ENCODE measurements at regions of chr15 and their contacts with region 1.

Region 1: GRCh38 chr15:89112341-89112971 is 24.2 kb downstream of the ABHD2 start:
- DNase-seq: no peak
- H3K4me3 ChIP-seq: no peak overlapping the region
- H3K27ac ChIP-seq: peak overlapping the region; percentile 51 to 68
- H3K4me1 ChIP-seq: peaks cover 14 to 54% of the 10 kb centered on the region in 2 experiments
- H3K27me3 ChIP-seq: no peaks in the 10 kb centered on the region
- CTCF ChIP-seq: no peak
- EP300 ChIP-seq: no peak; a peak in 1 of 4 replicates
- RAD21 ChIP-seq: no peak

Region 2: GRCh38 chr15:88982304-88982945 is 130.0 kb before region 1 on chr15:
- CTCF ChIA-PET with region 1: no interaction called
- POLR2A ChIA-PET with region 1: no interaction called
- DNase-seq: peak; percentile 44
- H3K4me3 ChIP-seq: no peak overlapping the region
- H3K27ac ChIP-seq: no peak overlapping the region; a peak in 1 of 4 replicates
- H3K4me1 ChIP-seq: no peaks in the 10 kb centered on the region; a peak in 1 of 4 replicates
- H3K27me3 ChIP-seq: no peaks in the 10 kb centered on the region
- CTCF ChIP-seq: no peak
- EP300 ChIP-seq: no peak
- RAD21 ChIP-seq: no peak

Region 3: DNA sequence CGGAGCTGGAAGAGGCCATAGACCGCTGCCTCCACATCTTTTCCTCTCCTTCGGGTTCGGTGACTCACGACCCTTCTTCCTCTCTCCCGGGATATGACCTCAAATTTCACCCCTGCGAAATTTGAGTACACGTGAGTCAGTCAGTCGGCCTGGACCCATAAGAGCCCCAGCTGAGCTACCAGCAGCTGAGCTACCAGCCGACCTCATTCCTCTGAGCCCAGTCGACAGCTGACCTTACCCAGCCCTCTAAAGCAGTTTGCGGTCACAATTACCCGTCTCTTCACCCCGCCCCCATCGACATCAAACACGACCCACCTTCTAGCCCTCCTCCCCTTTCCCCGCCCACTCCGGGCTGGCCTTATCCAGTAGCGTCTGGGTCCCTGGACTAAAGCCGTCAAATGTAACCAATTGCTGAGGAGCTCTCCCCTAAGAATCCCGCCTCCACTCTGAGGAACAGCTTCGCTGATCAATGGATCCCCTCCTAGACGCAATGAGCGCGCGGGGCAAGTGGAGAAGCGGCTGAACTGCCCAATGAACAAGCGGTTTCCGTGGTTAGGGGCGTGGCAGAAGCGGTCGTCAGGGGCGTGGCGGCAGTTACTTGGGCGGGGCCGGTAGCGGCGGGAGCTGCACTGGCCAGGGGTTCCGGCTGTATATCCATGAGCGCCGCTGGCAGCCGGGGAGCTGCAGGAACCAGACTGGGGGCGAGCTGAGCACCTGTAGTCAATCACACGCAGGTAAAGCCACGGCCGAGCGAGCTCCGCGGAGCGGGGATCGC is 24.4 kb before region 1 on chr15 and contains the start of gene ABHD2:
- CTCF ChIA-PET with region 1: interaction called, 3 read pairs
- POLR2A ChIA-PET with region 1: interaction called, 14 read pairs
- DNase-seq: peak; percentile 90
- H3K4me3 ChIP-seq: peak within 1 kb of the TSS; percentile 85 to 97
- H3K27ac ChIP-seq: peak within 1 kb of the TSS; percentile 97 to 98
- H3K4me1 ChIP-seq: peaks cover 31 to 70% of the 10 kb centered on the region in 2 experiments
- H3K27me3 ChIP-seq: no peaks in the 10 kb centered on the region
- CTCF ChIP-seq: no peak
- EP300 ChIP-seq: peak in 1 of 2 experiments; percentile 78; a peak in 3 of 4 replicates
- RAD21 ChIP-seq: no peak
- polyA plus RNA-seq, gene ABHD2: 19.2 and 25.7 TPM in 2 replicates